ENCODE measurements at regions of chr2 and their contacts with region 1.

Region 1: DNA sequence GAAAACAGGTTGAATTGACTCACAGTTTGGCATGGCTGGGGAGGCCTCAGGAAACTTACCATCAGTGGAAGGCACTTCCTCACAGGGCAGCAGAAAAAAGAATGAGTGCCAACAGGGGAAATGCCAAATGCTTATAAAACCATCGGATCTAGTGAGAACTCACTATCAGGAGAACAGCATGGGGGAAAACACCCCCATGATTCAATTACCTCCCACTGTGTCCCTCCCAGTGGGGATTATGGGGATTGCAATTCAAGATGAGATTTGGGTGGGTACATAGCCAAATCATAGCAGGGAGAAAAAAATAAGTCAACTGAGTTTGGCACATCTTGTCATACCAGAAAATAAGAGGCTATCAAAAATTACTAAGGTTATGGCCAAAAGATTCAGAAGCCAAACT is 96.3 kb downstream of the TRIP12 start:
- DNase-seq: no peak
- ATAC-seq: no peak
- H3K4me3 Mint-ChIP-seq: no peak overlapping the region
- H3K27ac Mint-ChIP-seq: no peak overlapping the region
- H3K4me1 Mint-ChIP-seq: peaks cover 21% of the 10 kb centered on the region
- H3K27me3 Mint-ChIP-seq: no peaks in the 10 kb centered on the region

Region 2: GRCh38 chr2:229835596-229836283 is 10.3 kb after region 1 on chr2:
- CTCF ChIA-PET with region 1: interaction called, 8 read pairs
- POLR2A ChIA-PET with region 1: interaction called, 10 read pairs
- intact Hi-C with region 1: no loop called
- DNase-seq: no peak
- ATAC-seq: peak; percentile 53
- H3K4me3 Mint-ChIP-seq: no peak overlapping the region
- H3K27ac Mint-ChIP-seq: no peak overlapping the region
- H3K4me1 Mint-ChIP-seq: peaks cover 59% of the 10 kb centered on the region
- H3K27me3 Mint-ChIP-seq: no peaks in the 10 kb centered on the region

Region 3: DNA sequence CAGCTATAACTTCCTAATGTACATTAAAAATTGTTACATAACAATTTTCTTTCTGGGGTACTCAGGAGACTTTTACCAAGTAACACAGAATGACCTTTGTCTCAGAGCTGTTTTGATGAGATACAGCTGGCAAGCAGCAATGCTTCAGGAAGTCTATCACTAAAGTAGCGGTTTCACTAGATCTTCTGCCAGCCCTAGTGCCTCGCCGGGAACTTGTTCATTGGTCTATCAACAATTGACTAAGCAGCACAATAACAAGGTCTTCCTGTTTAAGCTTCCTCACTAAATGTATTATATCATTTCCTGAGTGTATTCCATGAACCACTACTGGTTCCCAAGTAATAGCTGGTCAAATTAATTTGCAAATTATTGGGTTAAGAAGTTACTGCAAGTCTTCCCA is 27.1 kb after region 1 on chr2:
- CTCF ChIA-PET with region 1: no interaction called
- POLR2A ChIA-PET with region 1: interaction called, 3 read pairs
- intact Hi-C with region 1: loop called in 1 of 2 experiments (anchors 2 kb)
- DNase-seq: peak; percentile 60
- ATAC-seq: peak; percentile 84
- H3K4me3 Mint-ChIP-seq: peak overlapping the region; percentile 17
- H3K27ac Mint-ChIP-seq: peak overlapping the region; percentile 51
- H3K4me1 Mint-ChIP-seq: peaks cover 50% of the 10 kb centered on the region
- H3K27me3 Mint-ChIP-seq: no peaks in the 10 kb centered on the region

Region 4: GRCh38 chr2:229910832-229911412 is 85.4 kb after region 1 on chr2:
- CTCF ChIA-PET with region 1: interaction called, 5 read pairs
- POLR2A ChIA-PET with region 1: no interaction called
- intact Hi-C with region 1: loop called in 1 of 2 experiments (anchors 1 kb)
- DNase-seq: peak; percentile 38
- ATAC-seq: peak; percentile 75
- H3K4me3 Mint-ChIP-seq: no peak overlapping the region
- H3K27ac Mint-ChIP-seq: peak overlapping the region; percentile 2
- H3K4me1 Mint-ChIP-seq: peaks cover 52% of the 10 kb centered on the region
- H3K27me3 Mint-ChIP-seq: no peaks in the 10 kb centered on the region